ENCODE measurements at regions of chr17 and their contacts with region 1.

Region 1: DNA sequence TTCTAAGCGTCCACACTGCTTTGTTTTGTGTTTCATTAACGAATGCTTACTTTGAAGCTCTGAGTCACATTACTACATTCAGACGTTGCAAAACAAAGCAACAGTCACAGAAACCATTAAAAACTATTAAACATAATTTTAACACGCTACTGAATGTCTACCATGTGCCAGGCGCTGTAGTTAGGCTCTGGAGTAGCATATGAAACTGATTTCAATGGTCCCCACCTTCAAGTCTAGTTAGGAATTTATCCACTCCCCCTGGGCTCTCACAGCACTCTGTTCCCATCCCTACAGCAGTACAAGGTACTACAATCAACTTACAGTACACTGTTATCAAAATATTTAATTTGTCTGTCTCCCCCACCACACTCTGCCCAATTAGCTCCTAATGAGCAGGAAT is 631 bp downstream of the UTP6 start:
- DNase-seq: peak; percentile 12 to 43 (median 36)
- H3K4me3 ChIP-seq: peak overlapping the region; percentile 85 to 95 (median 92)
- H3K4me3 Mint-ChIP-seq: no peak overlapping the region
- H3K27ac ChIP-seq: peak overlapping the region in 1 of 2 donors; percentile 85
- H3K27ac Mint-ChIP-seq: no peak overlapping the region
- H3K4me1 ChIP-seq: peaks cover 12% of the 10 kb centered on the region in 2 donors
- H3K4me1 Mint-ChIP-seq: peaks cover 3% of the 10 kb centered on the region
- H3K27me3 ChIP-seq: no peaks in the 10 kb centered on the region
- H3K27me3 Mint-ChIP-seq: peaks cover 0 to 4% (median 0%) of the 10 kb centered on the region in 3 donors
- CTCF ChIP-seq: no peak

Region 2: GRCh38 chr17:31858642-31859473 is 42.0 kb before region 1 on chr17 and contains the start of gene COPRS:
- intact Hi-C with region 1: loop called (anchors 5 kb)
- DNase-seq: peak; percentile 80 to 90 (median 84)
- H3K4me3 ChIP-seq: peak within 1 kb of the TSS; percentile 54 to 79 (median 54)
- H3K4me3 Mint-ChIP-seq: peak within 1 kb of the TSS; percentile 84 to 91
- H3K27ac ChIP-seq: no peak within 1 kb of the TSS
- H3K27ac Mint-ChIP-seq: peak within 1 kb of the TSS in 5 of 7 donors; percentile 7 to 80 (median 72)
- H3K4me1 ChIP-seq: peaks cover 13 to 20% of the 10 kb centered on the region in 2 donors
- H3K4me1 Mint-ChIP-seq: peaks cover 23% of the 10 kb centered on the region
- H3K27me3 ChIP-seq: no peaks in the 10 kb centered on the region
- H3K27me3 Mint-ChIP-seq: peaks cover 0 to 2% (median 0%) of the 10 kb centered on the region in 3 donors
- CTCF ChIP-seq: no peak
- polyA plus RNA-seq, gene COPRS: 11.7 to 40.0 (median 38.9) TPM

Region 3: DNA sequence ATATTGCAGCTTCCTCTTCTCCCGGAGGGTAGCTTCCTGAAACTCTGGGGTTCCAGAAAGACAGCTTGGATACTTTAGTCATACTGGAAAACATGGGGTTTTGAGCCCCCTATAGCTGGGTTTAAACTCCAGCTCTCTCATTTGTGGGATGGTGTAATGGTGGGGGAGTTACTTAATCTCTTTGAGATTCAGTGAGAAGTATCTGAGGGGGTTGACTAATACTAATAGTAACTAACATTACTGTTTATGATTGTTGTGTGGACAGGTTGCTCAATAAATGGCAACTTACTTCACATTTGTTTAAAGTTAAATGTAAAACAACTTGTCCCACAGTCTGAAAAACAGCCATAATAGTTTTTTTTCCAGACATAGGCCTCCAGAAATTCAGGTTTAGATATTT is 30.9 kb after region 1 on chr17:
- intact Hi-C with region 1: loop called in 1 of 2 experiments (anchors 2 kb)
- DNase-seq: peak in 2 of 3 donors; percentile 16 to 20
- H3K4me3 ChIP-seq: no peak overlapping the region
- H3K4me3 Mint-ChIP-seq: no peak overlapping the region
- H3K27ac ChIP-seq: no peak overlapping the region
- H3K27ac Mint-ChIP-seq: no peak overlapping the region
- H3K4me1 ChIP-seq: peaks cover 6 to 11% of the 10 kb centered on the region in 2 donors
- H3K4me1 Mint-ChIP-seq: peaks cover 11% of the 10 kb centered on the region
- H3K27me3 ChIP-seq: no peaks in the 10 kb centered on the region
- H3K27me3 Mint-ChIP-seq: peaks cover 0 to 4% (median 0%) of the 10 kb centered on the region in 3 donors
- CTCF ChIP-seq: no peak

Region 4: DNA sequence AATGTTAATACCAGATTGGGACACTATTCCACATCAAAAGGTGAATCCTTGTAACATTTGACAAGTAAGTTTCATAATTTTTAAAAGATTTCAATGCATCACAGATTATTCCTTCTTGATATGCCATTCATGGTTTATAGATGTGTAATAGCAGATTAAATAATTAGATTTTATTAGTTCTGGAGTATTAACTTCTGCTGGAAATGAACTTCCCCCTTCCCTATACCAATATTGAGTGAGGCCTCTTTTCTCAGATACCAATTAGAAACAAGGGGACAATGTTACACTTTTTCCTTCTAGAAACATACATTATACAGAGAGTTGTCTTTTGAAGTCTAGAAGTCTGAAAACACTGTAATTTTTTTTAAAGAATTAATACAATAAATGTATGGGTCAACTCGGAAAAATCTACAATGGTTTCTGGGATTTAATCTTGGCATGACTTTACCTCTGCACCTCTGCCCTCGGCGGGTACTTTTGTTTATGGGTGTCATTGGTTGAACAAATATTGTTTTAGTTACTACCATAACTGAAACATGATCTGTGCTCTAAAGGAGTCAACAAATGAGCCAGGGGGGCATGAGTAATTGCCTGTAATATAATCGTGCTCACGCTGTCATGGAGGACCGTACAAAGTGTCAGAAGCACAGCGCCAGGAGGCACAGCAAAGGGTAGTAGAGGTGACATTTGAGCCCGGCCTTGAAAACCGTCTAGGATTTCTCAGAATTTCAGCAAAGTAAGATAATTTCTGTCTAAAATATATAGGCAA is 114.6 kb after region 1 on chr17:
- intact Hi-C with region 1: no loop called
- DNase-seq: no peak
- H3K4me3 ChIP-seq: no peak overlapping the region
- H3K4me3 Mint-ChIP-seq: no peak overlapping the region
- H3K27ac ChIP-seq: peak overlapping the region; percentile 32 to 61
- H3K27ac Mint-ChIP-seq: peak overlapping the region in 5 of 7 donors; percentile 41 to 76 (median 63)
- H3K4me1 ChIP-seq: peaks cover 19 to 20% of the 10 kb centered on the region in 2 donors
- H3K4me1 Mint-ChIP-seq: peaks cover 42% of the 10 kb centered on the region
- H3K27me3 ChIP-seq: no peaks in the 10 kb centered on the region
- H3K27me3 Mint-ChIP-seq: peaks cover 0 to 1% (median 0%) of the 10 kb centered on the region in 3 donors
- CTCF ChIP-seq: no peak

Region 5: GRCh38 chr17:32206861-32207260 is 306.0 kb after region 1 on chr17:
- intact Hi-C with region 1: no loop called
- DNase-seq: no peak
- H3K4me3 ChIP-seq: no peak overlapping the region
- H3K4me3 Mint-ChIP-seq: no peak overlapping the region
- H3K27ac ChIP-seq: no peak overlapping the region
- H3K27ac Mint-ChIP-seq: no peak overlapping the region
- H3K4me1 ChIP-seq: no peaks in the 10 kb centered on the region
- H3K4me1 Mint-ChIP-seq: no peaks in the 10 kb centered on the region
- H3K27me3 ChIP-seq: no peaks in the 10 kb centered on the region
- H3K27me3 Mint-ChIP-seq: peaks cover 0 to 1% (median 0%) of the 10 kb centered on the region in 3 donors
- CTCF ChIP-seq: no peak

Measured in CD14-positive monocyte (primary cell).